B cell (primary cell): ENCODE measurements at regions of chr11 and their contacts with region 1.

Region 1: GRCh38 chr11:65111744-65112414 is at the start of gene TM7SF2:
- DNase-seq: peak; percentile 94
- ATAC-seq: peak; percentile 81
- H3K4me3 ChIP-seq: peak within 1 kb of the TSS; percentile 16 to 92 (median 68)
- H3K4me3 Mint-ChIP-seq: peak within 1 kb of the TSS; percentile 89
- H3K27ac ChIP-seq: peak within 1 kb of the TSS; percentile 44 to 54
- H3K27ac Mint-ChIP-seq: peak within 1 kb of the TSS; percentile 84
- H3K4me1 ChIP-seq: peaks cover 28 to 51% of the 10 kb centered on the region in 2 donors
- H3K4me1 Mint-ChIP-seq: peaks cover 51% of the 10 kb centered on the region
- H3K27me3 ChIP-seq: no peaks in the 10 kb centered on the region
- H3K27me3 Mint-ChIP-seq: no peaks in the 10 kb centered on the region
- CTCF ChIP-seq: no peak
- total RNA-seq, gene TM7SF2: 28.5 and 35.3 TPM in 2 replicates

Region 2: GRCh38 chr11:65095974-65096806 is 15.7 kb before region 1 on chr11 and contains the start of gene VPS51:
- CTCF ChIA-PET with region 1: interaction called, 96 read pairs
- POLR2A ChIA-PET with region 1: interaction called, 26 read pairs
- intact Hi-C with region 1: loop called (anchors 1 kb)
- DNase-seq: peak; percentile 93
- ATAC-seq: peak; percentile 86
- H3K4me3 ChIP-seq: peak within 1 kb of the TSS; percentile 69 to 90 (median 77)
- H3K4me3 Mint-ChIP-seq: peak within 1 kb of the TSS; percentile 96
- H3K27ac ChIP-seq: peak within 1 kb of the TSS; percentile 77 to 81
- H3K27ac Mint-ChIP-seq: peak within 1 kb of the TSS; percentile 97
- H3K4me1 ChIP-seq: peaks cover 10 to 16% of the 10 kb centered on the region in 2 donors
- H3K4me1 Mint-ChIP-seq: peaks cover 24% of the 10 kb centered on the region
- H3K27me3 ChIP-seq: no peaks in the 10 kb centered on the region
- H3K27me3 Mint-ChIP-seq: no peaks in the 10 kb centered on the region
- CTCF ChIP-seq: no peak
- total RNA-seq, gene VPS51: 223 and 225 TPM in 2 replicates

Region 3: GRCh38 chr11:65134386-65135253 is 22.7 kb after region 1 on chr11 and contains the start of gene SYVN1:
- CTCF ChIA-PET with region 1: interaction called, 41 read pairs
- POLR2A ChIA-PET with region 1: interaction called, 160 read pairs
- intact Hi-C with region 1: loop called (anchors 1 kb)
- DNase-seq: peak; percentile 97
- ATAC-seq: peak; percentile 64
- H3K4me3 ChIP-seq: peak within 1 kb of the TSS; percentile 81 to 99 (median 96)
- H3K4me3 Mint-ChIP-seq: peak within 1 kb of the TSS; percentile 97
- H3K27ac ChIP-seq: peak within 1 kb of the TSS; percentile 98 to 99
- H3K27ac Mint-ChIP-seq: peak within 1 kb of the TSS; percentile 99
- H3K4me1 ChIP-seq: peaks cover 36 to 57% of the 10 kb centered on the region in 2 donors
- H3K4me1 Mint-ChIP-seq: peaks cover 66% of the 10 kb centered on the region
- H3K27me3 ChIP-seq: no peaks in the 10 kb centered on the region
- H3K27me3 Mint-ChIP-seq: no peaks in the 10 kb centered on the region
- CTCF ChIP-seq: no peak
- total RNA-seq, gene SYVN1: 187 and 188 TPM in 2 replicates

Region 4: GRCh38 chr11:65261591-65262380 is 149.9 kb after region 1 on chr11 and contains the start of gene POLA2:
- CTCF ChIA-PET with region 1: interaction called, 16 read pairs
- POLR2A ChIA-PET with region 1: no interaction called
- intact Hi-C with region 1: loop called (anchors 5 kb)
- DNase-seq: peak; percentile 98
- ATAC-seq: peak; percentile 88
- H3K4me3 ChIP-seq: peak within 1 kb of the TSS; percentile 85 to 97 (median 94)
- H3K4me3 Mint-ChIP-seq: peak within 1 kb of the TSS; percentile 94
- H3K27ac ChIP-seq: peak within 1 kb of the TSS; percentile 88 to 91
- H3K27ac Mint-ChIP-seq: peak within 1 kb of the TSS; percentile 99
- H3K4me1 ChIP-seq: peaks cover 11 to 18% of the 10 kb centered on the region in 2 donors
- H3K4me1 Mint-ChIP-seq: peaks cover 24% of the 10 kb centered on the region
- H3K27me3 ChIP-seq: no peaks in the 10 kb centered on the region
- H3K27me3 Mint-ChIP-seq: no peaks in the 10 kb centered on the region
- CTCF ChIP-seq: no peak
- total RNA-seq, gene POLA2: 28.7 and 33.2 TPM in 2 replicates